Activated CD8-positive, alpha-beta T cell treated with anti-CD3 and anti-CD28 coated beads for 36 hours (primary cell): ENCODE measurements at regions of chr22 and their contacts with region 1.

Region 1: GRCh38 chr22:44701824-44702478 is at the start of gene PRR5:
- DNase-seq: peak; percentile 91
- ATAC-seq: peak; percentile 92
- H3K4me3 Mint-ChIP-seq: peak within 1 kb of the TSS; percentile 74
- H3K27ac Mint-ChIP-seq: peak within 1 kb of the TSS; percentile 86
- H3K4me1 Mint-ChIP-seq: peaks cover 41% of the 10 kb centered on the region
- H3K27me3 Mint-ChIP-seq: no peaks in the 10 kb centered on the region
- CTCF ChIP-seq: no peak
- total RNA-seq, gene PRR5: 26.8 to 27.3 TPM

Region 2: DNA sequence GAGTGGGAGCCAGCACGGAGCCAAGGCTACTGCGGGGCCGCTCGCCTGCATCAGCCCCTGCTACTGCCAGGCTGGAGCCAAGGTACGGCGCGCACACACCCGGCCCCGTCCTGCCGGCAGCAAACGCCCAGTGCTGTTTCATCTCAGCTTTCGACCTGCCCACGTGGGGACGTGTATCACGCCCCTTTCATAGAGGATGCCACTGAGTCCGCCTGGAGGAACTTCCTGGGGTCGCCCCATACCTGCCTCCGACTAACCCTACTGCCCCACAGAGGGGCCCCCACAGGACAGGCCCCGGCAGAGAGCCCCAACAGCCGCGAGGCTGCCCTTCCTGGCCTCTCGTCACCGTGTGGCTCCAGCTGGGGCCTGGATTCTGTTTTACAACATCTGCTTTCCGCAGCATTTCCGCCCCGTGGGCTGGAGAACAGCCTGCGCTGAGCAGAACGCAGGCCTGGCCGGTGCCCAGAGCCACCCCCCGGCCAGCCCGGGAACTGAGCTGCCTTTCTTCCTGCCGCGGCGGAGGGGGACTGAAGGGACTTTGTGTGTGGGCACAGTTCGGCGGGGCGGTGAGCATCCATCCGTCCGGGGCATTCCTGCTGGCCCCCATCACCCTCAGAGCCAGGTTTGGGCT is 27.6 kb after region 1 on chr22:
- CTCF ChIA-PET with region 1: interaction called, 46 read pairs
- POLR2A ChIA-PET with region 1: interaction called, 4 read pairs
- intact Hi-C with region 1: loop called (anchors 2 kb)
- DNase-seq: peak; percentile 59
- ATAC-seq: peak; percentile 74
- H3K4me3 Mint-ChIP-seq: no peak overlapping the region
- H3K27ac Mint-ChIP-seq: peak overlapping the region; percentile 34
- H3K4me1 Mint-ChIP-seq: peaks cover 22% of the 10 kb centered on the region
- H3K27me3 Mint-ChIP-seq: no peaks in the 10 kb centered on the region
- CTCF ChIP-seq: no peak